ENCODE measurements at regions of chr16 and their contacts with region 1.

Region 1: DNA sequence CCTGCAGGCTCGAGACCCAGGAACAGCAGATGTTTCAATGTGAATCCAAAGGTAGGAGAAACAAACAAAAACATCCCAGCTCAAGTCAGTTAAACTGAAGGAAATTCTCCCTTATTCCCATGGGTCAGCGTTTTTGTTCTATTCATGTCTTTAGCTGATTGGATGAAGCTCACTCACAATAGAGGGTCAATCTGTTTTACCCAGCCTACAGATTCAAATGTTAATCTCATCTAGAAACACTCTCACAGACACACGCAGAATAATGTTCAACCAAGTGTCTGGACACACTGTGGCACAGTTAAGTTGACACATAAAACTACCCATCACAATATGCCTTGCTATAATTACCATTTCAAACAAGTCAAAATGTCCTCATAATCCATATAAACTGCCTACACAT is 180.6 kb upstream of the CDH8 start:
- DNase-seq: no peak
- ATAC-seq: no peak
- H3K4me3 ChIP-seq: no peak overlapping the region
- H3K27ac ChIP-seq: no peak overlapping the region
- H3K4me1 ChIP-seq: no peaks in the 10 kb centered on the region
- H3K27me3 ChIP-seq: no peaks in the 10 kb centered on the region
- CTCF ChIP-seq: no peak
- POLR2A ChIP-seq: no peak

Region 2: GRCh38 chr16:62870554-62870953 is 653.7 kb after region 1 on chr16:
- intact Hi-C with region 1: loop called in 2 of 10 experiments (anchors 5 to 10 kb)
- DNase-seq: no peak
- ATAC-seq: no peak
- H3K4me3 ChIP-seq: no peak overlapping the region
- H3K27ac ChIP-seq: no peak overlapping the region
- H3K4me1 ChIP-seq: no peaks in the 10 kb centered on the region
- H3K27me3 ChIP-seq: no peaks in the 10 kb centered on the region
- CTCF ChIP-seq: peak in 2 of 12 donors; percentile 14 to 16
- POLR2A ChIP-seq: no peak